T-cell (primary cell): ENCODE measurements at regions of chr2 and their contacts with region 1.

Region 1: DNA sequence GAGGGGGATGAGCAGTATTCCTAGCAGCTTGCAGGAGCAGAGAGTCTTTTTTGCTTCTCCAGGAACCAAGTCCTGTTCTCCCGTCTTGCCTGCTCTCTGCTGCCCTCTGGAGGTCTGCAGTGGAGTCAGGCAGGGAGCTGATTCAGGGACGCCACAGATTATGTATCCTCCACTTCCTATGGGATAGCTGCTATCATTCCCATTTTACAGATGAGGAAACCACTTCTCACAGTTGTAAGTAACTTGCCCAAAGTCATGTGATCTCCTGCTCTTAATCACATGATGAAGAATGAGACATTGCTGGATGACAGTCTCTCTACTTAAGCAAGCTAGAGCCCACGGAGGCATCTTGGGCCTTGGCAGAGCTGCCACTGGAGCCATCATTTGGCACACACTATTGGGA is 8.3 kb downstream of the SLC4A5 start:
- DNase-seq: peak; percentile 42 to 86 (median 67)
- ATAC-seq: peak; percentile 72 to 86 (median 78)
- H3K4me3 ChIP-seq: no peak overlapping the region
- H3K4me3 Mint-ChIP-seq: no peak overlapping the region
- H3K27ac ChIP-seq: no peak overlapping the region
- H3K27ac Mint-ChIP-seq: no peak overlapping the region
- H3K4me1 ChIP-seq: peaks cover 0 to 5% of the 10 kb centered on the region in 2 experiments
- H3K4me1 Mint-ChIP-seq: peaks cover 1 to 15% (median 14%) of the 10 kb centered on the region in 3 donors
- H3K27me3 ChIP-seq: no peaks in the 10 kb centered on the region
- H3K27me3 Mint-ChIP-seq: no peaks in the 10 kb centered on the region

Region 2: DNA sequence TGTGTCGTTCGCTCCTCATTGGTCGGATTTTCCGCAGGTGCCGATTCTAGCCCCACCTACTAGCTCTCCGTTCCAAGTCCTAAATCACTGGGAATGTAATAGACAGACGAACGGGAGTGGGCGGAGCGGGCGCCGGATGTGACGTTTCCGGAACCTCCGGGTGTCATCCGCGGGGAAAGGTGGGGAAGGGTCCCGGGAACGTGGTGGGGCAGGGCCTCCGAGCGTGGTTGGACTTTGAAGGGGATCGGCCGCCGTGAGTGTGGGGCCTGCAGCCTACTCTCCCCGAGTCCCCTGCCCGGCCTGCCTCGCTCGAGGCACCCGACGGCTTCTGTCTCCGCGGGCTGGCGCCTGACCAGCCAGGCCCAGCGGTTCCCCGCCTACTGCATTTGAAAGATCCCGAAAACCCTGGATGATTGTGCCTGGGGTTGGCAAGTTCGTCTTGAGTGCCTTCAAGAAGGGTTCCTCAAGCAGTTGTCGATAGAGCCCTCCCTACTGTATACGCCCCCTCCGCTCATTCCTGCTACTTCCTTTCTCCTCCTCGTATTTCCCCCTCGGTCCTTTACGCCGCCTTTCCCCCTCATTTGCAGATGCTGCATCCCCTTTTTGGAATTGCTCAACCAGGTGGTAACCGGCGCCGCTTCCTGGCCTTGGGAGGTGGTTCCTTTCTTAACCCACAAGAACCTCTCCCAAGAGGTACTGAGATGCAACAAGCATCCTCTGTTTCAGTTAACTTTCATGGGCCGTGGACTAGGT is 505.9 kb before region 1 on chr2 and contains the start of gene STAMBP:
- CTCF ChIA-PET with region 1: interaction called, 9 to 13 read pairs
- POLR2A ChIA-PET with region 1: no interaction called
- DNase-seq: peak; percentile 75 to 97 (median 83)
- ATAC-seq: peak; percentile 91 to 95 (median 94)
- H3K4me3 ChIP-seq: peak within 1 kb of the TSS; percentile 76 to 83
- H3K4me3 Mint-ChIP-seq: peak within 1 kb of the TSS; percentile 95 to 97 (median 96)
- H3K27ac ChIP-seq: peak within 1 kb of the TSS; percentile 94
- H3K27ac Mint-ChIP-seq: peak within 1 kb of the TSS; percentile 97 to 98
- H3K4me1 ChIP-seq: peaks cover 11 to 24% of the 10 kb centered on the region in 2 experiments
- H3K4me1 Mint-ChIP-seq: peaks cover 51 to 53% (median 52%) of the 10 kb centered on the region in 3 donors
- H3K27me3 ChIP-seq: no peaks in the 10 kb centered on the region
- H3K27me3 Mint-ChIP-seq: no peaks in the 10 kb centered on the region
- total RNA-seq, gene STAMBP: 21.6 to 32.5 (median 28.9) TPM

Region 3: DNA sequence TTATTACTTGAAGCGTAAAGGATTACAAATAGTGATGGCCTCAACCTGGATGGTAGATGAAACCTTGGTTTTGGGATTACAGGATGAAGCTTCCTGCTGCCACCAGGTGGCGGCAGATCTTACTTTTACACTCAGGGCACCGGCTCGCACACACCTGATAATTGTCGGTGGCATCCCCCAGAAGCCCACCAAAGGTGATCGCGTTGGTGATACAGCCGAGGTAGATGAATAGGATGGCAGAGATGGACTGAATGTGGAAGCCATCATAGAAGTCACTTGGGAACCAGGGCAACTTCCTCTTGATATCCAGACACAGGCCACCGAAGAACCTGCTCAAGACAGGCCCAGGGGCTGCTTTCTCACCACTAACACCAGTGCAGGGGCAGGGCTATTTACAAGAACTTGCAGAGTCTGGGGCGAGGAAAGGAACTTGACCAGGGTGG is 84.7 kb before region 1 on chr2:
- CTCF ChIA-PET with region 1: interaction called, 35 to 66 read pairs
- POLR2A ChIA-PET with region 1: no interaction called
- DNase-seq: peak; percentile 16 to 80 (median 47)
- ATAC-seq: peak; percentile 50 to 76 (median 65)
- H3K4me3 ChIP-seq: no peak overlapping the region
- H3K4me3 Mint-ChIP-seq: no peak overlapping the region
- H3K27ac ChIP-seq: no peak overlapping the region
- H3K27ac Mint-ChIP-seq: no peak overlapping the region
- H3K4me1 ChIP-seq: peaks cover 0 to 4% of the 10 kb centered on the region in 2 experiments
- H3K4me1 Mint-ChIP-seq: peaks cover 3 to 6% (median 6%) of the 10 kb centered on the region in 3 donors
- H3K27me3 ChIP-seq: no peaks in the 10 kb centered on the region
- H3K27me3 Mint-ChIP-seq: no peaks in the 10 kb centered on the region

Region 4: GRCh38 chr2:74267068-74267467 is 67.9 kb before region 1 on chr2:
- CTCF ChIA-PET with region 1: interaction called, 17 read pairs
- POLR2A ChIA-PET with region 1: no interaction called
- DNase-seq: peak in 34 of 35 experiments; percentile 22 to 78 (median 54)
- ATAC-seq: peak; percentile 92 to 100 (median 99)
- H3K4me3 ChIP-seq: no peak overlapping the region
- H3K4me3 Mint-ChIP-seq: peak overlapping the region; percentile 32 to 71 (median 38)
- H3K27ac ChIP-seq: peak overlapping the region; percentile 52
- H3K27ac Mint-ChIP-seq: peak overlapping the region; percentile 82 to 95
- H3K4me1 ChIP-seq: peaks cover 0 to 6% of the 10 kb centered on the region in 2 experiments
- H3K4me1 Mint-ChIP-seq: peaks cover 14 to 30% (median 21%) of the 10 kb centered on the region in 3 donors
- H3K27me3 ChIP-seq: no peaks in the 10 kb centered on the region
- H3K27me3 Mint-ChIP-seq: no peaks in the 10 kb centered on the region

Region 5: GRCh38 chr2:74345272-74345943 is 10.5 kb after region 1 on chr2:
- CTCF ChIA-PET with region 1: interaction called in 1 of 2 experiments, 13 read pairs
- POLR2A ChIA-PET with region 1: no interaction called
- DNase-seq: no peak
- ATAC-seq: no peak
- H3K4me3 ChIP-seq: no peak overlapping the region
- H3K4me3 Mint-ChIP-seq: no peak overlapping the region
- H3K27ac ChIP-seq: no peak overlapping the region
- H3K27ac Mint-ChIP-seq: no peak overlapping the region
- H3K4me1 ChIP-seq: no peaks in the 10 kb centered on the region
- H3K4me1 Mint-ChIP-seq: no peaks in the 10 kb centered on the region
- H3K27me3 ChIP-seq: no peaks in the 10 kb centered on the region
- H3K27me3 Mint-ChIP-seq: no peaks in the 10 kb centered on the region